ENCODE measurements at regions of chr4 and their contacts with region 1.

Region 1: GRCh38 chr4:158850800-158851644 is 82.2 kb downstream of the FNIP2 start:
- DNase-seq: no peak
- ATAC-seq: no peak
- H3K4me3 ChIP-seq: no peak overlapping the region
- H3K27ac ChIP-seq: no peak overlapping the region
- H3K4me1 ChIP-seq: no peaks in the 10 kb centered on the region
- CTCF ChIP-seq: peak; percentile 50
- EP300 ChIP-seq: no peak
- POLR2A ChIP-seq: no peak
- RAD21 ChIP-seq: peak; percentile 46 to 54; a peak in 4 of 5 replicates

Region 2: GRCh38 chr4:158840131-158840530 is 10.9 kb before region 1 on chr4:
- CTCF ChIA-PET with region 1: interaction called, 12 read pairs
- POLR2A ChIA-PET with region 1: no interaction called
- DNase-seq: no peak
- ATAC-seq: no peak
- H3K4me3 ChIP-seq: no peak overlapping the region
- H3K27ac ChIP-seq: no peak overlapping the region
- H3K4me1 ChIP-seq: no peaks in the 10 kb centered on the region
- CTCF ChIP-seq: no peak
- EP300 ChIP-seq: no peak
- POLR2A ChIP-seq: no peak
- RAD21 ChIP-seq: no peak

Region 3: DNA sequence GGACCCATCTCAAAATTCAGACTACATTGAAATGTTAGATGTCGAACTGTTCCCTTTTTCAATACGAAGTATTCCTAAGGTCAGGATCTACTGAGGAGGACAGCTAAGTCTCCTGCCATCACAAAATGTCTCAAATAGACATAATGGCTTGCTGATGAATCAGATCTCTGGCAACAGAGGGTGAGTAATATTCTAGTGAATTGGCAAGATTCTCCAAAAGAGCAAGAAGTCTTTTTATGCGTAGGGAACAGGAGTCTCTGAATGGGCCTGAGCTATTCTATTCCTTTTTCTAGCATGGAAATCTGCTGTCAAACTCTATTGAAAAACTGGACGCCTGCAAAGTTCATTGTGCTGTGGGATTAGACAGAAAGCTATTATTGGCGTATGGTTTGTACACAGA is 63.2 kb after region 1 on chr4:
- CTCF ChIA-PET with region 1: no interaction called
- POLR2A ChIA-PET with region 1: no interaction called
- DNase-seq: peak; percentile 8 to 52
- ATAC-seq: peak; percentile 90 to 92
- H3K4me3 ChIP-seq: no peak overlapping the region
- H3K27ac ChIP-seq: peak overlapping the region; percentile 41 to 43; a peak in 3 of 6 replicates
- H3K4me1 ChIP-seq: peaks cover 17% of the 10 kb centered on the region
- CTCF ChIP-seq: no peak
- EP300 ChIP-seq: no peak
- POLR2A ChIP-seq: no peak
- RAD21 ChIP-seq: no peak

Measured in A549 (cell line).